ENCODE measurements at regions of chr1 and their contacts with region 1.

Region 1: GRCh38 chr1:77683160-77684148 is 996 bp upstream of the ZZZ3 start:
- DNase-seq: peak; percentile 89
- H3K4me3 Mint-ChIP-seq: peak overlapping the region; percentile 89
- H3K27ac Mint-ChIP-seq: peak overlapping the region; percentile 99
- H3K4me1 Mint-ChIP-seq: peaks cover 28% of the 10 kb centered on the region
- H3K27me3 Mint-ChIP-seq: no peaks in the 10 kb centered on the region
- CTCF ChIP-seq: peak; percentile 94

Region 2: GRCh38 chr1:77143529-77144121 is 539.8 kb before region 1 on chr1:
- CTCF ChIA-PET with region 1: no interaction called
- POLR2A ChIA-PET with region 1: no interaction called
- intact Hi-C with region 1: loop called (anchors 1 kb)
- DNase-seq: peak; percentile 8
- H3K4me3 Mint-ChIP-seq: no peak overlapping the region
- H3K27ac Mint-ChIP-seq: no peak overlapping the region
- H3K4me1 Mint-ChIP-seq: no peaks in the 10 kb centered on the region
- H3K27me3 Mint-ChIP-seq: no peaks in the 10 kb centered on the region
- CTCF ChIP-seq: peak; percentile 36

Region 3: GRCh38 chr1:77533660-77534305 is 149.7 kb before region 1 on chr1:
- CTCF ChIA-PET with region 1: interaction called, 3 read pairs
- POLR2A ChIA-PET with region 1: interaction called, 8 read pairs
- intact Hi-C with region 1: loop called (anchors 2 kb)
- DNase-seq: peak; percentile 71
- H3K4me3 Mint-ChIP-seq: no peak overlapping the region
- H3K27ac Mint-ChIP-seq: no peak overlapping the region
- H3K4me1 Mint-ChIP-seq: peaks cover 14% of the 10 kb centered on the region
- H3K27me3 Mint-ChIP-seq: no peaks in the 10 kb centered on the region
- CTCF ChIP-seq: peak; percentile 84

Region 4: DNA sequence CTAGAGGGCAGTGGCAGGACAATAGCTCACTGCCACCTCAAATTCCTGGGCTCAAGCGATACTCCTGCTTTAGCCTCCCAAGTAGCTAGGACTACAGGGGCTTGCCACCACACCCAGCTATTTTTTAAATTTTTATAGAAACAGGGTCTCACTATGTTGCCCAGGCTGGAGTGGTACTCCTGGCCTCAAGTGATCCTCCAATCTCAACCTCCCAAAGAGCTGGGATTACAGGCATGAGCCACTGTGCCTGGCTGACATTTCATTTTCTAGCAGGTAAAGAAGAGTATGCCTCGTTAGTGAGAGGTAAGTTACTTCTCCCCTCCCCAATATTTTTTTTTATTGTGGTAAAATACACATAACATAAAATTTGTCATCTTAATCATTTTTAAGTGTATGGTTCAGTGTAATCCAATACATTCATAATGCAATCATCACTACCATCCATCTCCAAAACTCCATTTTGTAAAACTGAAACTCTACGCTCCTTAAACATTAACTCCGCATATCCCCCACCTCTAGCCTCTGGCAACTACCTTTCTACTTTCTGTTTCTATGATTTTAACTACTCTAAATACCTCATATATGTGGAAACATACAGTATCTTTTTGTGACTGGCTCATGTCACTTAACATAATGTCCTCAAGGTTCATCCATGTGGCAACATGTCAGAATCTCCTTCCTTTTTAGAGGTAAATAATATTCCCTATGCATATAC is 23.4 kb before region 1 on chr1:
- CTCF ChIA-PET with region 1: interaction called, 10 read pairs
- POLR2A ChIA-PET with region 1: interaction called, 66 read pairs
- intact Hi-C with region 1: no loop called
- DNase-seq: no peak
- H3K4me3 Mint-ChIP-seq: no peak overlapping the region
- H3K27ac Mint-ChIP-seq: no peak overlapping the region
- H3K4me1 Mint-ChIP-seq: peaks cover 11% of the 10 kb centered on the region
- H3K27me3 Mint-ChIP-seq: no peaks in the 10 kb centered on the region
- CTCF ChIP-seq: no peak

Region 5: DNA sequence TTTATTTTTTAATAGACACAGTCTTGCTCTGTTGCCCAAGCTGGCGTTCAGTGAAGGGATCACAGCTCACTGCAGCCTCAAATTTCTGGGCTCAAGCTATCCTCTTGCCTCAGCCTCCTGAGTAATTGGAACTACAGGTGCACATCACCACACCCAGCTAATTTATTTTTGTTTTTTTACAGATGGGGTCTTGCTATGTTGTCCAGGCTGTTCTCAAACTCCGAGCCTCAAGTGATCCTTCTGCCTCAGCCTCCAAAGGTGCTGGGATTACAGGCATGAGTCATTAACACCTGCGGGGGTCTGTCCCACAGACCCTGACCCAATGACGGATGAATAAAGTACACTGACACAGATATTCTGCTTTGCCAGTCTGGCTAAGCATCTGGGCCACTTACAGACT is 32.6 kb after region 1 on chr1:
- CTCF ChIA-PET with region 1: no interaction called
- POLR2A ChIA-PET with region 1: no interaction called
- intact Hi-C with region 1: no loop called
- DNase-seq: no peak
- H3K4me3 Mint-ChIP-seq: no peak overlapping the region
- H3K27ac Mint-ChIP-seq: no peak overlapping the region
- H3K4me1 Mint-ChIP-seq: no peaks in the 10 kb centered on the region
- H3K27me3 Mint-ChIP-seq: no peaks in the 10 kb centered on the region
- CTCF ChIP-seq: no peak

Region 6: DNA sequence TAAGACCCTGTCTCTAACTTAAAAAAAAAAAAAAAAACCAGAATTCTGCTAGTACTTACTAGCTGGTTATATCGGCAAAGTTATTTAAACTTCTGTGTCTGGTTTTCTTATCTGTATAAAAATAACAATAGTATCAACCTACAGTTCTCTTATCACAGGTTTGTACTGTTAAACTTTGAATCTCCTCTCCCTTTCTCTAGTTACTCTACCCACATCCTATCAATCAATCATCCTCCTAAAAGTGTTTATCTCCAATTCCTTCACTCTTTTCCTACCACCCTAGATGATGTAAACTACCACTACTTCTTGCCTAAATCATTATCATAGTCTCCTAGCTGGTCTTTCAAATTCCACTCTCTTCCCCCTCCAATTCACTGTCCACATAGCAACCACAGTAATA is 48.6 kb after region 1 on chr1:
- CTCF ChIA-PET with region 1: no interaction called
- POLR2A ChIA-PET with region 1: no interaction called
- intact Hi-C with region 1: no loop called
- DNase-seq: no peak
- H3K4me3 Mint-ChIP-seq: no peak overlapping the region
- H3K27ac Mint-ChIP-seq: no peak overlapping the region
- H3K4me1 Mint-ChIP-seq: peaks cover 9% of the 10 kb centered on the region
- H3K27me3 Mint-ChIP-seq: no peaks in the 10 kb centered on the region
- CTCF ChIP-seq: no peak

Region 7: DNA sequence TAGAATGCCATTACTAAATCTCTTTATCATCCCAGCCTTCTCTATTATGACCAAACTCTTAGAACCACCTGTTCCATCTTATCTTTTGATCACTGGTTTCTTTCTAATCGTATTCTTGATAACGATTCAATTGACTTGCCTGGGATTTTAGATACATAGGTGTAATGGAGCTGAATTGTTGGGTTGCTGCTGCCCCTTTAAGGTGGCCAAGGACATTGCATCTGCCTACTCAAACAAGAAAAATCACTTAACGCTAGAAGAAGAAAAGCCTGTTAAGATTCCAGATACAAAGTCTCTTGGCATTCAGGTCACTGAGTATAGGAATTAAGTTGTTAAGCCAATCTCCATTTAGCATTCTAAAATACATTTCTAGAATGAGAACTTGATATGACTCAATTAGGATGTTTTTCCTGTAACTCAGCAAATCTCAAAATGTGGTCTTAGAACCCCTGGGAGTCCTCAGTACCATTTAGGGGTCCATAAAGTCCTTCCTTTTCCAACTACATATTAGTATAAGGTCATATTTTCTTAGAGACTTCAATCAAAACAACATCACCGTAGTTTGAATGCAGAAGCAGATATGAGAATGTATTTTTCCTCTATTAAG is 217.3 kb after region 1 on chr1:
- CTCF ChIA-PET with region 1: interaction called, 3 read pairs
- POLR2A ChIA-PET with region 1: interaction called, 3 read pairs
- intact Hi-C with region 1: loop called (anchors 1 kb)
- DNase-seq: peak; percentile 66
- H3K4me3 Mint-ChIP-seq: no peak overlapping the region
- H3K27ac Mint-ChIP-seq: no peak overlapping the region
- H3K4me1 Mint-ChIP-seq: peaks cover 17% of the 10 kb centered on the region
- H3K27me3 Mint-ChIP-seq: no peaks in the 10 kb centered on the region
- CTCF ChIP-seq: peak; percentile 85

Region 8: DNA sequence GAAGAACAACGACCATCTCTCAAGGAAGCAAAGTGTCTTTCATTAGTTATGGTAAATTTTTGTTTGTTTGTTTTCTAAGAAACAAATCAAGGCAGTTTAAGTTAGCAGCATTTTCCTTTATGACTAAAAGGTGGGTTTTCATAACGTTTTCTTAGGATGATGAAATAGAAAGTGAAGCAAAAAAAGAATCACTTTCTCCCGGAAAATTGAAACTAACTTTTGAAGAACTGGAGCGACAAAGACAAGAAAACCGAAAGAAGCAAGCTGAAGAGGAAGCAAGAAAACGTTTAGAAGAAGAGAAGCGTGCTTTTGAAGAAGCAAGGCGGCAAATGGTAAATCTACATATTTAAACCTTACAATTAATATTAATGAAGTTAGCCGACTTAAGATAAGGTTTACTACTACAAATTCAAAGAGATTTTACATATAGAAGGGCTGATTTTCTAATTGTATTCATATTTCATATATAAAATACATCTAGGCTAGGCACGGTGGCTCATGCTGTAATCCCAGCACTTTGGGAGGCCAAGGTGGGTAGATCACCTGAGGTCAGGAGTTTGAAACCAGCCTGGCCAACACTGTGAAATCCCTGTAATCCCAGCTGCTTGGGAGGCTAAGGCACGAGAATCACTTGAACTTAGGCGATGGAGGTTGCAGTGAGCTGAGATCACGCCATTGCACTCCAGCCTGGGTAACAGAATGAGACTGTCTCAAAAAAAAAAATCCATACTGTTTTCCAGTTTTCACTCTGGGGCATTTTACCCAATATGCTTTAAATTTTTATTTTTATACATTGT is 243.3 kb after region 1 on chr1:
- CTCF ChIA-PET with region 1: no interaction called
- POLR2A ChIA-PET with region 1: no interaction called
- intact Hi-C with region 1: no loop called
- DNase-seq: no peak
- H3K4me3 Mint-ChIP-seq: no peak overlapping the region
- H3K27ac Mint-ChIP-seq: no peak overlapping the region
- H3K4me1 Mint-ChIP-seq: no peaks in the 10 kb centered on the region
- H3K27me3 Mint-ChIP-seq: no peaks in the 10 kb centered on the region
- CTCF ChIP-seq: no peak

Region 9: DNA sequence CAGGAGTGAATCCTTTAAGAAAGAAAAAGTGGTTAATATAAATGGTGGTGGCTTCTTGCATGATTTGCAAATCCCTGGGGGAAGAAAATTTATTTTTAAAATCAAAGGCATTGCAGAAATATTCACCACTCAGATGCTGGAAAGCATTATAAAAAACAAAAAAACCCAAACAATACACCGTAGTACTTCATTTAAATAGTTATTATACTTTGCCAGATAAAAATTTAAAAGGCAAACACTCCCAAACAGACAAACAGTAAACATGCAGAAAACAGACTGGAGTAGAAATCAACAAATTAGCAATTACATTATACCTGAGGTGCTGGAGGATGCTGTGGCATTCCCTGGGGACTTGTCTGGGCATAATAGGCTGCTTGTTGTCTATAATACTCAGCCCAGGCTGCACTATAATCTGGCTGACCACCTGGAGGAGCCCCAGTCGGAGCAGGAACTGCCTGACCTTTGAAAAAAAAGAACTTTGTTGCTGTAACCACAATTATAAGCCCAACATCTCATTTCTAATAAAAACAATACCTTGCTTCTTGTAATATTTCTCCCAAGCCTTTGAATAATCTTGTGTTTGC is 265.5 kb after region 1 on chr1:
- CTCF ChIA-PET with region 1: no interaction called
- POLR2A ChIA-PET with region 1: no interaction called
- intact Hi-C with region 1: no loop called
- DNase-seq: no peak
- H3K4me3 Mint-ChIP-seq: no peak overlapping the region
- H3K27ac Mint-ChIP-seq: no peak overlapping the region
- H3K4me1 Mint-ChIP-seq: no peaks in the 10 kb centered on the region
- H3K27me3 Mint-ChIP-seq: no peaks in the 10 kb centered on the region
- CTCF ChIP-seq: no peak